ENCODE measurements at regions of chr5 and their contacts with region 1.

Region 1: DNA sequence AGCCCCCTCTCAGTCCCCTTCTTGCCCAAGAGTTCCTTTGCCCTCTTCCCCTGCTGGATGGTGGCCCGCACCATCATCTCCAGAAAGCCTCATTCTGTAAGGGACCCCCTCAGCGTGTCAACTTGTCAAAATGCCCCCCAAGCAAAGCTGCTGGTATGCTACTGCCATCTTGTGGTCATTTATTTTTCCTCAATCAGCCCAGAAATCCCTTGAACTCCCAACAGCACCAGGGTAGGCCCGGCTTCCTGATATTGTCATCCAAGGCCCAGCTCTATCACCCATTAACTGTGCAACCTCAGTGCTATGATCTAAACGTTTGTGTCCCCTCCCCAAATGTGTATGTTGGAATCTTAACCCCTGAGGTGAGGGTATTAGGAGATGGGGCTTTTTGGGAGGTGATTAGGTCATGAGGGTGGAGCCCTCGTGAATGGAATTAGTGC is 53.2 kb upstream of the FBXW11 start:
- DNase-seq: no peak
- H3K4me3 ChIP-seq: no peak overlapping the region
- H3K27ac ChIP-seq: no peak overlapping the region
- H3K4me1 ChIP-seq: no peaks in the 10 kb centered on the region
- H3K27me3 ChIP-seq: no peaks in the 10 kb centered on the region
- CTCF ChIP-seq: peak; percentile 42 to 55

Region 2: GRCh38 chr5:171445644-171446516 is 613.8 kb before region 1 on chr5:
- CTCF ChIA-PET with region 1: no interaction called
- dilution Hi-C with region 1: loop called (anchors 25 kb)
- in situ Hi-C with region 1: no loop called
- intact Hi-C with region 1: no loop called
- DNase-seq: no peak
- H3K4me3 ChIP-seq: no peak overlapping the region
- H3K27ac ChIP-seq: no peak overlapping the region
- H3K4me1 ChIP-seq: no peaks in the 10 kb centered on the region
- H3K27me3 ChIP-seq: no peaks in the 10 kb centered on the region
- CTCF ChIP-seq: no peak

Region 3: GRCh38 chr5:171462928-171463862 is 596.5 kb before region 1 on chr5:
- CTCF ChIA-PET with region 1: no interaction called
- dilution Hi-C with region 1: no loop called
- in situ Hi-C with region 1: no loop called
- intact Hi-C with region 1: no loop called
- DNase-seq: no peak
- H3K4me3 ChIP-seq: no peak overlapping the region
- H3K27ac ChIP-seq: no peak overlapping the region
- H3K4me1 ChIP-seq: no peaks in the 10 kb centered on the region
- H3K27me3 ChIP-seq: peaks cover 3% of the 10 kb centered on the region
- CTCF ChIP-seq: no peak

Region 4: DNA sequence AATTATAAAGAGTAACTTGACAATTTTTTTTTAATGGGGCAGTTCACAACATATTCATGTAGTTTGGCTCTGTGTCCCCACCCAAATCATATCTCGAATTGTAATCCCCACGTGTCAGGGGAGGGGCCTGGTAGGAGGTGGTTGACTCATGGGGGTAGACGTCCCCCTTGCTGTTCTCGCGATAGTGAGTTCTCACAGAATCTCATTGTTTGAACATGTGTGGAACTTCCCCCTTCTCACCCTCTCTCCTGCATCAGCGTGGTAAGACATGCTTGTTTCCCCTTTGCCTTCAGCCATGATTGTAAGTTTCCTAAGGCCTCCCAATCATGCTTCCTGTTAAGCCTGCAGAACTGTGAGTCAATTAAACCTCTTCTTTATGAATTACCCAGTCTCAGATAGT is 93.9 kb before region 1 on chr5:
- CTCF ChIA-PET with region 1: no interaction called
- dilution Hi-C with region 1: no loop called
- in situ Hi-C with region 1: no loop called
- intact Hi-C with region 1: no loop called
- DNase-seq: no peak
- H3K4me3 ChIP-seq: no peak overlapping the region
- H3K27ac ChIP-seq: no peak overlapping the region
- H3K4me1 ChIP-seq: peaks cover 8% of the 10 kb centered on the region
- H3K27me3 ChIP-seq: no peaks in the 10 kb centered on the region
- CTCF ChIP-seq: no peak

Region 5: DNA sequence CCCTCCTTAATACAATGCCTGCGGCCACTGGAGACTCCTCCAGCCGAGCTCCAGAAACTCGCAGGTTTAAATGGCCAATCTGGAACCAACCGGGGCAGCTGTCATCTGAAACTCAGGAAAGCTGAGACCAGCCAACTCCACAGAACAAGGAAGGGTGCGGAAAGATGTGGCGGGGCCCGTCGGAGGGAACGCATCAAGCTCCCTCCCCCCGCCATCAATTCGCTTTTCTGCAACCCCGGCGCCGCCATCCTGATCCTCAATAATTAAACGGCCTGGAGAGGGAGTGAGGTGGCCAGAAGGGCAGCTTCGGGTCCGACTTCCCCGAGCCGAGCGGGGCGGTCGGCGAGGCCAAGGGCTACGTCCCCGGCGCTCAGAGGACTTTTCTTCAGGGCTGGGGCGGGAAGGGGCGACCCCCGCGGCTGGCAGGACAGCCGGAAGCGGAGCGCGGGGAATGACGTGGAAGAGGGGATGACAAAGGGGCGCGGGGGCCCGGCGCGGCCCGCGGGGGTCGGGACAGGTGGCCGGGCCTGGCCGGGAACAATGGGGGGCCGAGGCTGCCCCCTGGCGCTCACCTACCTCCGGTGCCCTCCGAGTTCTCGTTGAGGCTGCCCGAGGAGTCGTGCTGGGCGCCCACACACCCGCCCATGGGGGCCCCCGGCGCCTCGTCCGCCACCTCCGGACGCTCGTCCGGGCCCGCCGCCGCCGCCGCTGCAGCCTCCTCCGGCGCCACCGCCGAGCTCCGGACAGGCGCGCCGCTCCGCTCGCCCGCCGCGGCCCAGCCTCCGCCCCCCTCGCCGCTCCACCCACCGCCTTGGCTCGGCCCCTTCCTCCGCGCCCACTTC is 223.6 kb after region 1 on chr5 and contains the start of gene UBTD2:
- CTCF ChIA-PET with region 1: no interaction called
- dilution Hi-C with region 1: no loop called
- in situ Hi-C with region 1: no loop called
- intact Hi-C with region 1: loop called (anchors 5 kb)
- DNase-seq: peak; percentile 77
- H3K4me3 ChIP-seq: peak within 1 kb of the TSS; percentile 89 to 97 (median 90)
- H3K27ac ChIP-seq: peak within 1 kb of the TSS; percentile 72
- H3K4me1 ChIP-seq: peaks cover 10% of the 10 kb centered on the region
- H3K27me3 ChIP-seq: no peaks in the 10 kb centered on the region
- CTCF ChIP-seq: peak; percentile 11 to 57
- total RNA-seq, gene UBTD2: 15.5 to 17.8 TPM